AG04450 (cell line): ENCODE measurements at regions of chr13 and their contacts with region 1.

Region 1: DNA sequence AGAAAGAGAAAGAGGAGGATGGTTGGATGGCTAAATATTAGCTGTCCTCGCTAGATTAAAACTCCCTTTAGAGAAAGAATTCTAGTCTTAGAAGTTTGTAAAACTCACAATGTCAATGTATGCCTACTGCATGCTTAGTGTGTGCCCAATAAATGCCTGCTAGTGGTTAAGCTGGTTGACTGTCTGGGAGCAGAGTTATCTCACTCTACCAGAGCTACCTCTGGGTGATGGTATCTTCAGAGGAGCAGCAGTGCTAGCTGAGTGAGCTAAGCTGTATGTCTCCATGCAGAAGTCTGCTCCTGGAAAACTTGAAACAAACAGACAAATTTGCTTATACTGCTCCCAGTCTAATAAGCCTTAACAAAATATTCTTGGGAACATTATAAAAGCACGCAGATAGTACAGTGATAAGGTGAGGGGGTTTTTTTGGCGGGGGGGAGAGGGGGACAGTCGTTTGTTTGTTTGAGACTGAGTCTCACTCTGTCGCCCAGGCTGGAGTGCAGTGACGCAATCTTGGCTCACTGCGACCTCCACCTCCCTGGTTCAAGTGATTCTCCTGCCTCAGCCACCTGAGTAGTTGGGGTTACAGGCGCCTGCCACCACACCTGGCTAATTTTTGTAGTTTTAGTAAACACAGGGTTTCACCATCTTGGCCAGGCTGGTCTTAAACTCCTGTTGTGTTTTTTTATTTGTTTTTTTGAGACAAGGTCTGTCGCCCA is 202.8 kb upstream of the TSC22D1 start:
- DNase-seq: no peak
- H3K4me3 ChIP-seq: no peak overlapping the region
- H3K27ac ChIP-seq: no peak overlapping the region
- H3K27me3 ChIP-seq: no peaks in the 10 kb centered on the region
- CTCF ChIP-seq: no peak

Region 2: GRCh38 chr13:44812818-44813217 is 33.9 kb after region 1 on chr13:
- CTCF ChIA-PET with region 1: no interaction called
- POLR2A ChIA-PET with region 1: interaction called, 11 read pairs
- DNase-seq: no peak
- H3K4me3 ChIP-seq: no peak overlapping the region
- H3K27ac ChIP-seq: no peak overlapping the region
- H3K27me3 ChIP-seq: no peaks in the 10 kb centered on the region
- CTCF ChIP-seq: no peak

Region 3: DNA sequence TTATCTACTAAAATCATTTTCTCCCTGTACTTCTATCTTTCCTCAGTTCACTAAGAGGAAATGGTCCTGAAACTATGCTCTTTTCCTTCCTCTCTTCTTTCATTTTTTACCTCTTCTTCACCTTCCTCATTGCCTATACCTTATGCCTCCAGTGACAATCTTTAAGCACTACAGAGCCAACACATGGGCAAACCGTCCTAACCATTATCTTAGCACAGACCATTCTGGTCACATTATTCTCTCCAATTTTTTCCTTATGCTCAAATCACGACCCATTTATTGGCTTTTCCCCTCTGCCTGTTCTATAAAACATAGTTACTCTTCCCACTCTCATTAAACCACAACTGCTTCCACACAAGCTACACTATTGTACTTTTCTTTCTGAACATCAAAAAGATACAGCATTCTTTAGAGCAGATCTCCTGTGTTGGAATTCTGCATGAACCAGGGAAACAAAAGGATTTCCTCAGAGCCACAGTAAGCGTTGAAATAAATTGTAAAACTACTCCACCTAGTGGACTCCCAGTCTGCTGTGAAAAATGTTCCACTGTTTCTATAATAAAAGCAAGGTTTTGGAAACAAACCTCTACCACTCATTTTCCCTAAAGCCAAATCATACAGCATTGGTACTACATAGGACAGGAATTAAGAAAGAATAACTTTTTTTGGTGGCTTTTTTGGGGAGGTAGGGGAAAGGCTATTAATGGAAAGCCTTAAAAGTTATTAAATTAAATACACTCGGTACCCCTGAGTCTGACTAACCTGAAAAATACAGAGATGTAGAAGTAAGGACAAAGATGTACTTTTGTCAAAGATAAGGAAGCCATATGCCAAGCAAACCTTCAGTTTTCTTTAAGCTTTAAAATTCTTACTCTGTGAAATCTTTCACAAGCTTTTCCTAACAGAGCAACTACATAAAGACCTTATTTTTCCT is 190.9 kb after region 1 on chr13:
- CTCF ChIA-PET with region 1: no interaction called
- POLR2A ChIA-PET with region 1: no interaction called
- DNase-seq: peak; percentile 34
- H3K4me3 ChIP-seq: no peak overlapping the region
- H3K27ac ChIP-seq: no peak overlapping the region
- H3K27me3 ChIP-seq: no peaks in the 10 kb centered on the region
- CTCF ChIP-seq: peak; percentile 73